ENCODE measurements at regions of chr19 and their contacts with region 1.

Region 1: DNA sequence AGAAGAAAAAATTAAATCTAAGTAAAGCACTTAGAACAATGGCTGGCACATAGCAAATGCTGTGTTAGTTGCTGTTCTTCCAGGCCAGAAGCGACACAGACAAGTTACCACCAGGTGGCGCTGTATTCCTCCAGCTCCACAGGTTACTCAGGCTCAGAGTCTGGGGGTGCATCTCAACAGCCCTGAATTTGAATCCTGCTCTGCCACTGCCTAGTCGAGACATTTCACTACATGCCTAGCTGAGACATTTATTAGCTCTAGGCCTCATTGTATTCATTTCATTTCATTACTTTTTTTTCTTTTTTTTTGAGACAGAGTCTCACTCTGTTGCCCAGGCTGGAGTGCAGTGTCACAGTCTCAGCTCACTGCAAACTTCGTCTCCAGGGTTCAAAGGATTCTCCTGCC is 16.4 kb upstream of the CYP2B6 start:
- DNase-seq: peak; percentile 42 to 68 (median 65)
- ATAC-seq: peak in 2 of 4 donors; percentile 46 to 67
- H3K4me3 ChIP-seq: no peak overlapping the region
- H3K27ac ChIP-seq: no peak overlapping the region
- H3K4me1 ChIP-seq: no peaks in the 10 kb centered on the region
- H3K27me3 ChIP-seq: peaks cover 0 to 20% (median 0%) of the 10 kb centered on the region in 9 donors
- CTCF ChIP-seq: peak; percentile 70 to 95 (median 84)
- POLR2A ChIP-seq: no peak

Region 2: DNA sequence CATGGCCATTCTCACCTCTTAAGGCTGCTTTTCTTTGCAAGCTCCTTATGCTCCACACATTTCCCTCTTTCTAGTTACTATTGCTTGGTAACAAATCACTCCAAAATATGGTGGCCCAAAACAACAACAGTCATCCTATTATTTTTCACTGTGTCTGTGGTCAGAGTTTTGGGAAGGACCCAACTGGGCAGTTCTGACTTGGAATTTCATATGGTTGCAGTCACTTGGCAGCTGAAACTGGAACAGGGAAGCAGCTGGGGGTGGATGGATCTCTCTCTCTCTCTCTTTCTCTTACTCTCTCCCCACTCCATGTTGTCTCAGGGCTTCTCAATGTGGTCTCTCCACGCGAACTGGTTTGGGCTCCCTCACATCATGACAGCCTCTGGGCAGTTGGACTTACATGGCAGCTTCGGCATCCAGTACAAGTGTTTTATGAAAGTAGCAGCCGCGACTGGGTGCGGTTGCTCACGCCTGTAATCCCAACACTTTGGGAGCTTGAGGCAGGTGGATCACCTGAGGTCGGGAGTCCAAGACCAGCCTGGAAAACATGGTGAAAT is 323.8 kb before region 1 on chr19:
- intact Hi-C with region 1: loop called in 1 of 10 experiments (anchors 10 kb)
- DNase-seq: peak in 1 of 5 donors; percentile 48
- ATAC-seq: peak in 2 of 4 donors; percentile 42 to 48
- H3K4me3 ChIP-seq: no peak overlapping the region
- H3K27ac ChIP-seq: peak overlapping the region in 8 of 12 donors; percentile 21 to 72 (median 36)
- H3K4me1 ChIP-seq: peaks cover 0 to 33% (median 16%) of the 10 kb centered on the region in 12 donors
- H3K27me3 ChIP-seq: no peaks in the 10 kb centered on the region
- CTCF ChIP-seq: no peak
- POLR2A ChIP-seq: no peak

Region 3: GRCh38 chr19:40897962-40898361 is 76.7 kb before region 1 on chr19:
- intact Hi-C with region 1: no loop called
- DNase-seq: no peak
- ATAC-seq: no peak
- H3K4me3 ChIP-seq: no peak overlapping the region
- H3K27ac ChIP-seq: no peak overlapping the region
- H3K4me1 ChIP-seq: no peaks in the 10 kb centered on the region
- H3K27me3 ChIP-seq: no peaks in the 10 kb centered on the region
- CTCF ChIP-seq: no peak
- POLR2A ChIP-seq: no peak

Region 4: DNA sequence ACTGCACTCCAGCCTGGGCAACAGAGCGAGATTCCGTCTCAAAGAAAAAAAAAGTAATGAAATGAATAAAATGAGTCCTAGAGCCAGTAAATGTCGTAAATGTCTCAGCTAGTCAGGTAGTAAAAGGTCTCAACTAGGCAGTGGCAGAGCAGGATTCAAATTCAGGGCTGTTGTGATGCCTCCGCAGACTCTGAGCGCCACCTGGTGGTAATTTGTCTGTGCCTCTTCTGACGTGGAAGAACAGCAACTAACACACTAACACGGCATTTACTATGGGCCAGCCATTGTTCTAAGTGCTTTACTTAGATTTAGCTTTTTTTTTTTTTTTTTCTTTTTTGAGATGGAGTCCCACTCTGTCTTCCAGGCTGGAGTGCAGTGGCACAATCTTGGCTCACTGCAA is 169.8 kb after region 1 on chr19:
- intact Hi-C with region 1: loop called (anchors 2 to 10 kb)
- DNase-seq: peak; percentile 70 to 84 (median 73)
- ATAC-seq: peak; percentile 47 to 80 (median 73)
- H3K4me3 ChIP-seq: no peak overlapping the region
- H3K27ac ChIP-seq: no peak overlapping the region
- H3K4me1 ChIP-seq: no peaks in the 10 kb centered on the region
- H3K27me3 ChIP-seq: peaks cover 0 to 20% (median 4%) of the 10 kb centered on the region in 9 donors
- CTCF ChIP-seq: peak; percentile 69 to 83 (median 78)
- POLR2A ChIP-seq: no peak